CD8-positive, alpha-beta T cell (primary cell): ENCODE measurements at regions of chr5 and their contacts with region 1.

Region 1: GRCh38 chr5:5810461-5810860 is 388.0 kb downstream of the ICE1 start:
- DNase-seq: no peak
- ATAC-seq: no peak
- H3K4me3 ChIP-seq: no peak overlapping the region
- H3K4me3 Mint-ChIP-seq: no peak overlapping the region
- H3K27ac ChIP-seq: no peak overlapping the region
- H3K27ac Mint-ChIP-seq: no peak overlapping the region
- H3K4me1 ChIP-seq: no peaks in the 10 kb centered on the region
- H3K4me1 Mint-ChIP-seq: no peaks in the 10 kb centered on the region
- H3K27me3 ChIP-seq: no peaks in the 10 kb centered on the region
- H3K27me3 Mint-ChIP-seq: no peaks in the 10 kb centered on the region
- CTCF ChIP-seq: no peak

Region 2: DNA sequence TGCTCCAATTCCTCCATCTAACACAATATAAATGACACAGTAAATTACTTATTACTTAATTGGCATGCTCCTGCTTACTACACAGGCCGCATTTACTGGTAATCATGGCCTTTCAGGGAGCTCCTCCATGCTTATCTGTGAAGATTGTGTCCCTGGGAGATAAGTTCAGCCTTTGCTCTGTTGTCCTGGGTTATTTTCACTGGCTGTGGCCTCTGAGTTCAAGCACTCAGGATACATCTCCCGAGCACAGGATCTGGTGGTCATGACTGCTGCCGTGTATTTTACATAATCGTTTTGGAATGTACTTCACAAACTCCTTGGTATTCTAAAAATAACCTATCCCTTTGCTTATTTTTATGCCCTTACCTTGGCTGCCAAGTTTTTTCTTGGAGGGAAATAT is 172.2 kb before region 1 on chr5:
- CTCF ChIA-PET with region 1: no interaction called
- POLR2A ChIA-PET with region 1: no interaction called
- intact Hi-C with region 1: loop called in 1 of 2 experiments (anchors 5 kb)
- DNase-seq: no peak
- ATAC-seq: no peak
- H3K4me3 ChIP-seq: no peak overlapping the region
- H3K4me3 Mint-ChIP-seq: no peak overlapping the region
- H3K27ac ChIP-seq: no peak overlapping the region
- H3K27ac Mint-ChIP-seq: no peak overlapping the region
- H3K4me1 ChIP-seq: no peaks in the 10 kb centered on the region
- H3K4me1 Mint-ChIP-seq: no peaks in the 10 kb centered on the region
- H3K27me3 ChIP-seq: peaks cover 0 to 4% of the 10 kb centered on the region in 2 experiments
- H3K27me3 Mint-ChIP-seq: peaks cover 16% of the 10 kb centered on the region
- CTCF ChIP-seq: no peak